GM12878 (cell line): ENCODE measurements at regions of chr4 and their contacts with region 1.

Region 1: GRCh38 chr4:56575820-56576429 is 70.3 kb downstream of the ARL9 start:
- DNase-seq: no peak
- ATAC-seq: no peak
- H3K4me3 ChIP-seq: no peak overlapping the region
- H3K27ac ChIP-seq: no peak overlapping the region
- H3K4me1 ChIP-seq: no peaks in the 10 kb centered on the region
- H3K27me3 ChIP-seq: no peaks in the 10 kb centered on the region
- CTCF ChIP-seq: peak; percentile 18 to 31 (median 23); a peak in 3 of 6 replicates
- EP300 ChIP-seq: no peak
- POLR2A ChIP-seq: no peak
- RAD21 ChIP-seq: peak; percentile 59

Region 2: DNA sequence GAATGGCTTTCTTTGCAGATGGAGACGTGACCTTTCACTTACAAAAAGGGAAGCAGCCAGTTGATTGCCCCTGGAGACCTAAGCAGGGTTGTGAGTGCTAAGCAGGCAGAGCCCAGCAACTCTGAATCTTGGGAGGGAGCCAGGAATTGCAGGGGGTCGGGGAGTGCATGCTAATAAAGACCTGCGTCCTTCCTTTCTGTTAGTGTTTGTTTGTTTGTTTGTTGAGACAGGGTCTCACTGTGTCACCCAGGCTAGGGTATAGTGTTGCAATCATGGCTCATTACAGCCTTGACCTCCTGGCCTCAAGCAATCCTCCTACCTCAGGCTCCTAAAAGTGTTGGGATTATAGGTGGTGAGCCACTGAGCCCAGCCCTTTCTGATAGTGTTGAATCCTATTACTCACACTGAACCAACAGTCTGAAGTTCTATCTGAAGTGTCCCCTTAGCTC is 489.8 kb before region 1 on chr4:
- CTCF ChIA-PET with region 1: no interaction called
- POLR2A ChIA-PET with region 1: no interaction called
- RAD21 ChIA-PET with region 1: no interaction called
- SMC1A ChIA-PET with region 1: no interaction called
- in situ Hi-C with region 1: no loop called
- intact Hi-C with region 1: no loop called
- DNase-seq: no peak
- ATAC-seq: no peak
- H3K4me3 ChIP-seq: no peak overlapping the region
- H3K27ac ChIP-seq: no peak overlapping the region
- H3K4me1 ChIP-seq: no peaks in the 10 kb centered on the region
- H3K27me3 ChIP-seq: no peaks in the 10 kb centered on the region
- CTCF ChIP-seq: no peak
- EP300 ChIP-seq: no peak
- POLR2A ChIP-seq: no peak
- RAD21 ChIP-seq: no peak

Region 3: GRCh38 chr4:56828784-56829535 is 253.0 kb after region 1 on chr4:
- CTCF ChIA-PET with region 1: no interaction called
- POLR2A ChIA-PET with region 1: no interaction called
- RAD21 ChIA-PET with region 1: no interaction called
- SMC1A ChIA-PET with region 1: no interaction called
- in situ Hi-C with region 1: no loop called
- intact Hi-C with region 1: loop called (anchors 10 kb)
- DNase-seq: no peak
- ATAC-seq: peak; percentile 66
- H3K4me3 ChIP-seq: no peak overlapping the region
- H3K27ac ChIP-seq: no peak overlapping the region
- H3K4me1 ChIP-seq: peaks cover 6% of the 10 kb centered on the region
- H3K27me3 ChIP-seq: no peaks in the 10 kb centered on the region
- CTCF ChIP-seq: no peak
- EP300 ChIP-seq: peak in 1 of 2 experiments; percentile 29; a peak in 1 of 4 replicates
- POLR2A ChIP-seq: no peak
- RAD21 ChIP-seq: no peak

Region 4: DNA sequence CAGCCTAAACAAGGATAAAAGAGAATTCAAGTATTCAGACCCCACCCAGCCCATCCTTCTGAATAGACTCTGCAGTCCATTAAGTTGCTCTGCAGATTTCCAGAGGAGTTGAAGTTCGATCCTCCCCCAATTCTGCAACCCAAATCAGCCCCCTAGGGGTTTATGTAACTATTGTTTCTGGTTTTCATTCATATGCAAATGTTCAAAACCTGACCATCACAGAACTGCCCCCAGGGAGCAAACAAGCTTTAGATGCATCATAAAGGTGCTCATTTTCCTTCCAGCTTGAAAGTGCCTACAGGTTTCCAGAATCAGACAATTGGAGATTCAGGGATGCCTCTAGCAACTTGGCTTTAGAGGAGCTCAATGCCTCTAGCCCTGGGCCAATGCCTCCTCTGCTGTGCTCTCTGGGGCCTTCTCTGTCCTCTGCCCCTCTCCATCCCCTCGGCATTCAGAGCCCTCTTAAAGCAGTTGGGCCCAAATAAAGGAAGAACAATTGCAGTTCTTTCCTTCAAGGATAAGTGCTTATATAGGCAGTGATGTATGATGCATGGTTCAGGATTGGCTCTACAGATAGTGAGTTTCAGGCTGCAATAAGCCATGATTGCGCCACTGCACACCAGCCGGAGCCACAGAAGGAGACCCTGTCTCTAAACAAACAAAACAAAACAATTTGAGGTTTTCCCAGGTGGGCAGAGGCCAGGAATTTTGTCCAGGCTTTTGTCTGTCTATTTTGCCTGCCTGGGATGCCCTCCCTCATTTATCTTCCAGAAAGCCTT is 269.1 kb after region 1 on chr4:
- CTCF ChIA-PET with region 1: no interaction called
- POLR2A ChIA-PET with region 1: no interaction called
- RAD21 ChIA-PET with region 1: no interaction called
- SMC1A ChIA-PET with region 1: no interaction called
- in situ Hi-C with region 1: no loop called
- intact Hi-C with region 1: no loop called
- DNase-seq: no peak
- ATAC-seq: peak; percentile 72
- H3K4me3 ChIP-seq: no peak overlapping the region
- H3K27ac ChIP-seq: no peak overlapping the region
- H3K4me1 ChIP-seq: no peaks in the 10 kb centered on the region
- H3K27me3 ChIP-seq: no peaks in the 10 kb centered on the region
- CTCF ChIP-seq: no peak
- EP300 ChIP-seq: no peak
- POLR2A ChIP-seq: no peak
- RAD21 ChIP-seq: no peak